ENCODE measurements at regions of chr5 and their contacts with region 1.

Region 1: GRCh38 chr5:138226910-138227309 is 13.8 kb upstream of the CDC23 start:
- DNase-seq: no peak
- ATAC-seq: no peak

Region 2: DNA sequence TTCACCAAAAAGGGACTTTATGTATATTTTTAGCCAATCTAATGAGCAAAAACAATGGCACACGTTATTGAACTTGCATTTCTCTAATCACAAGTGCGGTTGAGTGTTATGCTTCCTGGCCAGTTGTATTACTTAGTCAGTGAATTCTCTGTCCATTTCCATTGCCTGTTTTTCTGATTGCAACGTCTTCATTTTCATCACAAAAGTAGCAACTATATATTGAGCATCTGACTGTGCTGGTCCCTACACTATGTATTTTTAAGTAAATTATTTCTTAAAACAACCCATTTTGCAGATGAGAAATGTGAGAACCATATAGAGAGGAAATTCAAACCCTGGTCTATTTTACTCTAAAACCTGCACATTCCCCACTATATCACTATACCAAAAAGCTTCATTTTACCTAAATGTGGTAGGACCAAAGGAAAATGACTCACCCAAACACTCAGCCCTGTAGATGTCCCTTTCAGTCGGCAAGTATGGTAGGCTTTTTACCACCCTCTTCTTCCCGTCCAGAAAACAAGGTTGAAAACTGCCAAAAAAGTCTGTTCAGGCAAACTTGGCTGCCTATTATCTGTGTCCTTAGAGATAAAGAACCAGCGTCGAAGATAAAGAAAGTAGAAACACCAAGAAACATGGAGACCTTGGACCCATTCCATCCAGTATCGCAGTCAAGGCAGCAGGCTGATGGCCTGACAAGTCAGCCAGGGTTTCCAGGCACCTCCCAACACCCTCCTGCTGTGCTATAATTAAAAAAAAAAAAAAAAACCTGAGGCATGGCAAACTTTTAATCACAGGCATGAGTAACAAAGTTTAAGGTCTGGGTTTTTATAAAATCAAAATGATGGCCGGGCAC is 175.2 kb before region 1 on chr5:
- intact Hi-C with region 1: no loop called
- DNase-seq: no peak
- ATAC-seq: no peak

Region 3: DNA sequence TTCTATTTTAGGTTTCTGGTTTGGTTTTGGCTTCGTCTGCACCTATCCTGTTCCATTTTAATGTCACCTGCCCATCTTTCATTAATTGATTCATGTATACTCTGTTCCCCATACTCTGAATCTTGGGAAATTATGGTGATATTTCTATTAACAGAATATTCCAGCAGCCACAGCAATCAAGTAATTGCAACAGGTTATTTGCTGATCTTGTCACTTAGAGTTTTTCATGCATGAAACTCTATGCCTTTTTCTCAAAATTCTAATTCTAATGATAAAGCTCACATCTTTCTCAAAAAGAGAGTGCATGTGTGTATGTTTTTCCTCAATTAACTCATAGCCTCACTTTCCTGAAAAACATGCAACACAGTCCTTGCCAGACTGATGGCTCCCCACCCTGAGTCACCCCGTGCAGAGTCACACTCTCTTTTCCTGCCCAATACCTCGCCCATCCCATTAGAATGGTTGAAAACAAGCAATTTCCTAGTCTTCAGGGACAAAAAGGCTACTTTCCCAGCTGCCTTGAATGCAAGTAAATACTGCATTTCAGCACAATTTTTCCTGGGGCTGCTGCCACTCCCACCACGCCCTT is 31.9 kb after region 1 on chr5:
- intact Hi-C with region 1: no loop called
- DNase-seq: no peak
- ATAC-seq: no peak

Region 4: GRCh38 chr5:138282920-138283742 is 56.2 kb after region 1 on chr5:
- intact Hi-C with region 1: loop called in 1 of 2 experiments (anchors 10 kb)
- DNase-seq: peak in 1 of 2 donors; percentile 16
- ATAC-seq: peak; percentile 85

Measured in left colon (tissue), 2 donors.